MCF 10A (cell line): ENCODE measurements at regions of chr10 and their contacts with region 1.

Region 1: DNA sequence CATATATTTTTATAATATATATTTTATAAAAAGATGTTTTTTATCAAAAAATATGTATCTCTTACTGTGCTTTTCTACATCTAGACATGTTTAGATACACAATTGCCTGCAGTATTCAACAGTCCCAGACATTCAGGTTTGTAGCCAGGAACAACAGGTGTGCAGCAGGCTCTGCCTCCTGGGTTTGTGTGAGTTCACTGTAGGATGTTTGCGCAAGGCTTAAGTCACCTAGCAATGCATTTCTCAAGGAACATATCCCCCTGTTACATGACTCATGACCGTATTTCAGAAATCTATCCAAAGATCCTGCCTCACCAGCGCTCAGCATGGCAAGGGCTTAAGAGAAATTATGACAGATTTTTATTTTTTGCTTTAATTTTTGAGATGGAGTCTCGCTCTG is 41.5 kb downstream of the PITRM1 start:
- DNase-seq: peak; percentile 94
- H3K4me3 Mint-ChIP-seq: no peak overlapping the region
- H3K27ac Mint-ChIP-seq: peak overlapping the region; percentile 82
- H3K4me1 Mint-ChIP-seq: peaks cover 18% of the 10 kb centered on the region
- H3K27me3 Mint-ChIP-seq: no peaks in the 10 kb centered on the region
- CTCF ChIP-seq: no peak

Region 2: GRCh38 chr10:3068201-3068967 is 62.7 kb before region 1 on chr10:
- CTCF ChIA-PET with region 1: no interaction called
- POLR2A ChIA-PET with region 1: interaction called, 3 read pairs
- intact Hi-C with region 1: loop called (anchors 1 kb)
- DNase-seq: peak; percentile 50
- H3K4me3 Mint-ChIP-seq: peak overlapping the region; percentile 91
- H3K27ac Mint-ChIP-seq: peak overlapping the region; percentile 39
- H3K4me1 Mint-ChIP-seq: peaks cover 25% of the 10 kb centered on the region
- H3K27me3 Mint-ChIP-seq: no peaks in the 10 kb centered on the region
- CTCF ChIP-seq: peak; percentile 14

Region 3: DNA sequence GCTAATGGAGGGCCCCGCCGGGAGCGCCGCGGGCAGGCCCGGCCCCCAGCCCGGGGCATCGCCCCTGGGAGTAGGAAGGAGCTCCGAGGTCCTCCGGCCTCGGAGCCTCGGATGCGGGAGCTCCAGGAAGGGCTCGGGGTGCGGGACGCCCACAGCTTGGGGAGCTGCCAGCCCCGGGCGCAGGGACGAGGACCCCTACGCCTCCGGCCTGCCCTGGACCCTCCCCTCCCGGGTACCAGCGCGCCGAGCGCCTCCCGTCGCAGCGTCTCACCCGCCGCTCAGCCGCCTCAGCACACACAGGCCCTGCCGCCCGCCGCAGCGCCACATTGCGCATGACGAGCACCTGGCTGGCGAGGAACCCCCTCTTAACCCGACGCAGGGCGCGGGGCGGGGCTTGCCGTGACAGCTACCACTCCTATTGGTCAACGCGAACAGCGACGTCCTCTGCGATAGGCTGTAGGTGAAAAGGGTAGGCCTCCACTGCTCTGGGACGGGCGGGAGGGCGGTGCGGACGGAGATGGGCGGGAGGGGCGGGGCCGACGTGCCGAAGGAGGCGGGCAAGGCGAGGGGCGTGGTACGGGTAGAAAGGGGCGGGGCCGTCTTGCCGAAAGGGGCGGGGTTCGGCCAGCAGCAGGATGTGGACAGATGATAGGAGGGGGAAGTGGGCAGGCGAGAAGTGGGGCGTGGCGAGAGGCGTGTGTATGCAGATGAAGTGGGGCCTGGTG is 41.5 kb after region 1 on chr10 and contains the start of gene PITRM1:
- CTCF ChIA-PET with region 1: no interaction called
- POLR2A ChIA-PET with region 1: interaction called, 4 read pairs
- intact Hi-C with region 1: loop called (anchors 1 kb)
- DNase-seq: peak; percentile 99
- H3K4me3 Mint-ChIP-seq: peak within 1 kb of the TSS; percentile 78
- H3K27ac Mint-ChIP-seq: peak within 1 kb of the TSS; percentile 55
- H3K4me1 Mint-ChIP-seq: peaks cover 17% of the 10 kb centered on the region
- H3K27me3 Mint-ChIP-seq: no peaks in the 10 kb centered on the region
- CTCF ChIP-seq: no peak
- total RNA-seq, gene PITRM1: 132 and 136 TPM in 2 replicates

Region 4: GRCh38 chr10:3192856-3193635 is 62.0 kb after region 1 on chr10:
- CTCF ChIA-PET with region 1: no interaction called
- POLR2A ChIA-PET with region 1: no interaction called
- intact Hi-C with region 1: no loop called
- DNase-seq: peak; percentile 64
- H3K4me3 Mint-ChIP-seq: no peak overlapping the region
- H3K27ac Mint-ChIP-seq: no peak overlapping the region
- H3K4me1 Mint-ChIP-seq: peaks cover 14% of the 10 kb centered on the region
- H3K27me3 Mint-ChIP-seq: no peaks in the 10 kb centered on the region
- CTCF ChIP-seq: peak; percentile 63